PC-3 (cell line): ENCODE measurements at regions of chr4 and their contacts with region 1.

Region 1: DNA sequence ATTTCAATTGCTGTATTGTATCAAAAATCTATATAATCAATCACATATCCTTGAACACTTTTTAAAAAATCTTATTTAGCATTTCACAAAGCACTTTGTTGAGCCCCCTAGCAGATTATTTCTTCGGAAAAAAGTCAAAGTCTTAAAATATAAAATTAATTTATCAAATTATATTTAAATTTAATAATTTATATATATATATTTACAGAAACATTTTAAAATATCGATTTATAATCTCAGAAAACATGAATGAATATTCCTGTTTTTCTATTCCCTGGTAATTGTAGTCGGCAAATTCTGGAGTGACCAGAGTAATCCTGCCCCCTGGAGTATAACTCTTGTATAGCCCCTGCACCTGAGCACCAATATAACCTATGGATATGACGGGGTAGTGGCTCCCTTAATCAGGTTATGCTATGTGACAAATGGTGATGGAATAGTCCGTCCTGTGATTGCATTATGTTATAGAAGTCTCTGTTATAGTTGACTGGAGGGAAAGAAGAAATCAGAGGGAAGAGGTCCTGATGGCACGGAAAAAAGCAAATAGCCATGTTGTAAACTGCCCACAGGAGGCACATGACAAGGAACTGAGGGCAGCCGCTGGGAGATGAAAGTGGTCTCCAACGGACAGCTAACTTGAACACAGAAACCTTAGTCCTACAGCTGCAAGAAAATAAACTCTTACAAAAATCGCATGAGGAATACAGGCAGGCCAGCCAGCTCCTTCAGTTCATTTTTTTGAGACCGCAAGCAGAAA is 1092.3 kb downstream of the ARAP2 start:
- DNase-seq: peak; percentile 67
- ATAC-seq: peak; percentile 58; the same call in 1 of the 2 replicates
- H3K4me3 ChIP-seq: no peak overlapping the region
- H3K27ac ChIP-seq: no peak overlapping the region
- H3K4me1 ChIP-seq: no peaks in the 10 kb centered on the region
- H3K27me3 ChIP-seq: no peaks in the 10 kb centered on the region
- CTCF ChIP-seq: peak; percentile 67

Region 2: GRCh38 chr4:36187723-36188333 is 1035.8 kb after region 1 on chr4:
- CTCF ChIA-PET with region 1: no interaction called
- POLR2A ChIA-PET with region 1: no interaction called
- intact Hi-C with region 1: loop called (anchors 5 kb)
- DNase-seq: peak; percentile 47
- ATAC-seq: no peak
- H3K4me3 ChIP-seq: no peak overlapping the region
- H3K27ac ChIP-seq: no peak overlapping the region
- H3K4me1 ChIP-seq: no peaks in the 10 kb centered on the region
- H3K27me3 ChIP-seq: no peaks in the 10 kb centered on the region
- CTCF ChIP-seq: peak; percentile 77